ENCODE measurements at regions of chr9 and their contacts with region 1.

Region 1: DNA sequence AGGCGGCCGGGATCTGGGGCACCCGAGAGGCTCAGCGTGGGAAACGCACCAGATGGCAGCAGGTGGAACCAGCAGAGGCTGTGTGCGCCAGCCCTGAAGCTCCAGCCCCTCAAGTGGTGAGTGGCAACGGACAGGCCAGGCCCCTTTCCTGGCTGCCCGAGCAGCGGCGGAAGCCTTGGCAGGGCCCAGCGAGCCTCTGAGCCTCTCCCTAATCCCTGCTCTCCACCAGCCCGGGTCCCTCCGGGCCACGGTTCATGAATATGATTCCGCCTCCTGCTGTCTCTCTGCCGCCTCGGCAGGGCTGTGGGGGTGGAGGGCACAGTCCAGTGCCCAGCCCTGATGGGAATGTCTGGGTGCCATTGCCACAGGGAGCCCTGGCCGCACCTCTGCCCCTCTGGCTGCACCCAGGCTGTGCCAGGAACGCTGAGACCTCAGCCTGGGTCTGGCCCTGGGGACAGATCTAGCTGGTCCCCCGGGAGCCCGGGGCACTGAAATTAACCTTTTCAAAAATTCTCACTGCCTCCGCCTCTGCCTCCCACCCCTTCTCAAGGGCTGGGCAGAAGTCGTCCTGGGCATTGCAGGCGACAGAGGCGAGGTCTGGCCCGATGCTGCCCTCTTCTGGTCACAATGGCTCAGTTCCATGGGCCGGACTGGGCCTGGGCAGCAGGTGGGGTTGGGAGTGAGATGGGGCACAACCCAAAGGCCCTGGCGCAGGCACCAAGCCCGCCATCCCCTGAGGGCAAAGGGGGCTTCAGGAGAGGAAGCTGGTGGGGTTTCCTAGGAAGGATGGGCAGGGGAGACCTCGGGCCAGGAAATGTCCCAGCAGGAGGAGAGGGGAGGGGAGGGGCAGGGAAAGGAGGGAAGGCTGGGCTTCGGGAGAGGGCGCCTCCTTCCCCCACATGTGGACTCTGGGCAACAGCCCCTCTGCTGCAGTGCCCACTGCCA is 20.3 kb downstream of the CCDC187 start:
- DNase-seq: peak; percentile 45
- ATAC-seq: peak; percentile 99
- H3K4me3 ChIP-seq: no peak overlapping the region
- H3K27ac ChIP-seq: no peak overlapping the region
- H3K4me1 ChIP-seq: no peaks in the 10 kb centered on the region
- H3K27me3 ChIP-seq: no peaks in the 10 kb centered on the region
- CTCF ChIP-seq: peak; percentile 88 to 93 (median 91)
- EP300 ChIP-seq: no peak
- POLR2A ChIP-seq: no peak
- RAD21 ChIP-seq: peak; percentile 89

Region 2: DNA sequence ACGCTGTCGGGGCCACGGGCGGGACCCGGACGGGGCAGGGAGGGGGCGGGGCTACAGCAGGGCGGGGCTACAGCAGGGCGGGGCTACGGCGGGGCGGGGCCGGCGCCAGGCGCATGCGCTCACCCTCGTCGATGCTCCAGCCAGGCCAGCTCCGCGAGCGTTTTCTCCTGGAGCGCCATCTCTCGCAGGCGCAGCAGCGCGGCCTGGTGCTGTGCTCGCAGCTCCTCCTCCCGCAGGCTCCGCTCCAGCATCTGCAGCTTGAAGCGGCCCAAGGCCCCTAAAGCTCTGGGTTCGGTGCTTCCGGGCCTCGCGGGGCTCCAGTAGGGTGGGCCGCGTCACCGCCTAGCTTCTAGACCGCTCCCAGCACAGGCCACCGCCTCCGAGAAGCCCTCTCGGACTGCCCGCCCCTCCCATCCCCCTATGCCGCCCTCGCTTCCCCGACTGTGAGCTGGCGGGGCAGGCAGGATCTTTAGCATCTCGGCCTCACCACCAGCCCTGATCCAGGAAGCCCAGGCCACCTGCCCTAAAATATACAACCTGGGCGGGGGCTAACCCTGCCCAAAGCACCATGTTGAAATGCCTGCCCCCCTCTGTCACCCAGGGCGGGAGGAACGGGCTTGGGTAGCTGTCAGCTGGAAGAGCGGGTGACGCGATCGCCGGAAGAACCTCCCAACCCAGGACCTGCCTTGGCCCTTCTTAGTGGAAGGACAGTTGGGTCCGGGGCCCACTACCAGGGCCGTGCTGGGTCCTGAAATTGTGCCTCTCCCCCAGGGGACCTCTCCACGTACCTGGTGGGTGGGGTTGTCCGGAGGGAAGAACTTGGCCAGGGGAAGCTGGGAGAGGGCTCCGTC is 16.1 kb before region 1 on chr9:
- CTCF ChIA-PET with region 1: interaction called, 11 read pairs
- POLR2A ChIA-PET with region 1: no interaction called
- RAD21 ChIA-PET with region 1: no interaction called
- SMC1A ChIA-PET with region 1: no interaction called
- in situ Hi-C with region 1: no loop called
- intact Hi-C with region 1: no loop called
- DNase-seq: no peak
- ATAC-seq: peak; percentile 97
- H3K4me3 ChIP-seq: peak overlapping the region; percentile 83
- H3K27ac ChIP-seq: peak overlapping the region; percentile 30
- H3K4me1 ChIP-seq: no peaks in the 10 kb centered on the region
- H3K27me3 ChIP-seq: no peaks in the 10 kb centered on the region
- CTCF ChIP-seq: peak; percentile 14 to 54 (median 19); a peak in 3 of 6 replicates
- EP300 ChIP-seq: no peak
- POLR2A ChIP-seq: peak; percentile 89
- RAD21 ChIP-seq: peak; percentile 16; the same call in 1 of the 2 replicates